IMR-90 (cell line): ENCODE measurements at regions of chr4 and their contacts with region 1.

Region 1: GRCh38 chr4:128287871-128288688 is 467 bp upstream of the PGRMC2 start:
- DNase-seq: peak; percentile 99
- ATAC-seq: peak; percentile 92
- H3K4me3 ChIP-seq: peak overlapping the region; percentile 65
- H3K27ac ChIP-seq: peak overlapping the region; percentile 90
- H3K4me1 ChIP-seq: peaks cover 4% of the 10 kb centered on the region; the same call in 1 of the 2 replicates
- H3K27me3 ChIP-seq: no peaks in the 10 kb centered on the region
- CTCF ChIP-seq: peak; percentile 28; the same call in 1 of the 2 replicates
- POLR2A ChIP-seq: peak; percentile 70
- RAD21 ChIP-seq: peak; percentile 37

Region 2: GRCh38 chr4:128191115-128191781 is 96.8 kb before region 1 on chr4:
- CTCF ChIA-PET with region 1: no interaction called
- POLR2A ChIA-PET with region 1: no interaction called
- dilution Hi-C with region 1: no loop called
- in situ Hi-C with region 1: no loop called
- intact Hi-C with region 1: loop called (anchors 1 kb)
- DNase-seq: peak; percentile 77
- ATAC-seq: peak; percentile 98
- H3K4me3 ChIP-seq: no peak overlapping the region
- H3K27ac ChIP-seq: peak overlapping the region; percentile 9
- H3K4me1 ChIP-seq: peaks cover 5% of the 10 kb centered on the region
- H3K27me3 ChIP-seq: no peaks in the 10 kb centered on the region
- CTCF ChIP-seq: peak; percentile 92
- POLR2A ChIP-seq: no peak
- RAD21 ChIP-seq: peak; percentile 95

Region 3: GRCh38 chr4:128386761-128387599 is 98.9 kb after region 1 on chr4:
- CTCF ChIA-PET with region 1: no interaction called
- POLR2A ChIA-PET with region 1: no interaction called
- dilution Hi-C with region 1: no loop called
- in situ Hi-C with region 1: no loop called
- intact Hi-C with region 1: loop called (anchors 1 kb)
- DNase-seq: peak; percentile 97
- ATAC-seq: peak; percentile 68
- H3K4me3 ChIP-seq: no peak overlapping the region
- H3K27ac ChIP-seq: peak overlapping the region; percentile 91
- H3K4me1 ChIP-seq: peaks cover 34% of the 10 kb centered on the region
- H3K27me3 ChIP-seq: no peaks in the 10 kb centered on the region
- CTCF ChIP-seq: 0 out of 2 replicates have a peak, but pooled peaks have one; percentile 18
- POLR2A ChIP-seq: peak; percentile 53
- RAD21 ChIP-seq: peak; percentile 29

Region 4: GRCh38 chr4:128553686-128554515 is 265.8 kb after region 1 on chr4:
- CTCF ChIA-PET with region 1: no interaction called
- POLR2A ChIA-PET with region 1: no interaction called
- dilution Hi-C with region 1: no loop called
- in situ Hi-C with region 1: no loop called
- intact Hi-C with region 1: loop called (anchors 2 kb)
- DNase-seq: no peak
- ATAC-seq: no peak; the same call in 1 of the 2 replicates
- H3K4me3 ChIP-seq: peak overlapping the region; percentile 53; the same call in 1 of the 2 replicates
- H3K27ac ChIP-seq: peak overlapping the region; percentile 88; the same call in 1 of the 2 replicates
- H3K4me1 ChIP-seq: peaks cover 14% of the 10 kb centered on the region
- H3K27me3 ChIP-seq: no peaks in the 10 kb centered on the region
- CTCF ChIP-seq: no peak
- POLR2A ChIP-seq: no peak
- RAD21 ChIP-seq: no peak

Region 5: DNA sequence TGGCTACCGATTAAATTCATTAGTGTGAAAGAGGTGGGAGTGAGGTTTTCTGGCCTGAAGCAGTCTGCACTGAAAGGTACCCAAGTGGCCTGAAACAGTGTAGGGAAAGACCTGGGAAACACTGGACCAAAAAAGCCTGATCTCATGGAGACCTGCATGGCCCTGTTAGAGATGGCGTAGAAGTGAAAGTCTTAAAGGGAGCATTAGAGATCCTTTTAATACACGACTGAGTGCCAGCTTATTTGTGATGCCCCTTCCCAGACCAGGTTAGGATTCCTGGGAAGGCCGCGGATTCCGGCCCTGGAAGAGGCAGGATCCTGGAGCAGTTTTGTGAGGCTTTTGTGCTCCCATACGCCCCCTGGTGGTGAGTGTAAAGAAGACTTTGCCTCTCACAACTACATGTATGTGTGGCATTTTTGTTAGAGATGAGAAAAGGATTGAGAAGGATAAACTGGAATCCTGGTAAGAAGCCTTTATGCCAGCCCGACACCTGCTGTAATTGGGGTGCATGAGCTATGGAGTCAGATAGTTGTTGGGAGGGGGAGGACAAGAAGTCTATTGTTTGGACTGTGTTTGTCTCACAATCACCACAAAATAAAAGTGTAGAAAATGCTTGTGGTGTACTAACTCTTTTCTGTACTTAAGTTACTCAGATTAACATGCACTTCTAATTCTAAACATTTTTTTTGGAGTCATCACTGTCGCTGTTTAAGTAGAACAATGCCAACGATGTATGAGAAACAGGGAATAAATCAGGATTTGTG is 575.4 kb after region 1 on chr4:
- CTCF ChIA-PET with region 1: no interaction called
- POLR2A ChIA-PET with region 1: no interaction called
- dilution Hi-C with region 1: no loop called
- in situ Hi-C with region 1: loop called (anchors 10 kb)
- intact Hi-C with region 1: loop called (anchors 5 kb)
- DNase-seq: peak; percentile 80
- ATAC-seq: peak; percentile 65; the same call in 1 of the 2 replicates
- H3K4me3 ChIP-seq: no peak overlapping the region
- H3K27ac ChIP-seq: 0 out of 2 replicates have a peak overlapping the region, but pooled peaks have one; percentile 0
- H3K4me1 ChIP-seq: peaks cover 24% of the 10 kb centered on the region
- H3K27me3 ChIP-seq: no peaks in the 10 kb centered on the region
- CTCF ChIP-seq: peak; percentile 79
- POLR2A ChIP-seq: no peak
- RAD21 ChIP-seq: peak; percentile 78

Region 6: DNA sequence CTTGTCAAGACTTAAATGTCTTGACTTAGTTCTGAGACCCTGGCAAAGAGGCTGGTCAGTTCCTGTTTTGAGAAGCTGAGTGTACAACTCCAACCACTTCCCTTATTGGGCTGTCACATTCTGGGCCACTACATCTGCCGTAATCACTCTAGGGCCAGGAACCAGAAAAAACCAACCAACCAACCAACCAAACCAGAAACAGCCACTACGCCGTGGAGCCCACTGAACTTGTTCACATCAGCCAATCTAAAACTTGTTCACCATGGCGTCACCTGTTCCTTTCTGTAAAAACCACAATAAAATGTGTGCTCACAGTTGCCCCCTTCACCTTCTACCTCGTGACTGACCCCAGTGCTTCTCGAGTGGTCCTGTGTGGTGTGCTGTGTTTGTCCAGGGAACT is 628.8 kb after region 1 on chr4:
- CTCF ChIA-PET with region 1: no interaction called
- POLR2A ChIA-PET with region 1: no interaction called
- dilution Hi-C with region 1: no loop called
- in situ Hi-C with region 1: no loop called
- intact Hi-C with region 1: no loop called
- DNase-seq: no peak
- ATAC-seq: no peak
- H3K4me3 ChIP-seq: no peak overlapping the region
- H3K27ac ChIP-seq: no peak overlapping the region
- H3K4me1 ChIP-seq: no peaks in the 10 kb centered on the region
- H3K27me3 ChIP-seq: no peaks in the 10 kb centered on the region
- CTCF ChIP-seq: no peak
- POLR2A ChIP-seq: no peak
- RAD21 ChIP-seq: no peak

Region 7: GRCh38 chr4:128974136-128974581 is 686.1 kb after region 1 on chr4:
- CTCF ChIA-PET with region 1: no interaction called
- POLR2A ChIA-PET with region 1: no interaction called
- dilution Hi-C with region 1: no loop called
- in situ Hi-C with region 1: no loop called
- intact Hi-C with region 1: no loop called
- DNase-seq: peak; percentile 25
- ATAC-seq: peak; percentile 69
- H3K4me3 ChIP-seq: no peak overlapping the region
- H3K27ac ChIP-seq: no peak overlapping the region
- H3K4me1 ChIP-seq: peaks cover 4% of the 10 kb centered on the region
- H3K27me3 ChIP-seq: no peaks in the 10 kb centered on the region
- CTCF ChIP-seq: no peak
- POLR2A ChIP-seq: no peak
- RAD21 ChIP-seq: no peak

Region 8: GRCh38 chr4:129344058-129344457 is 1056.0 kb after region 1 on chr4:
- CTCF ChIA-PET with region 1: no interaction called
- POLR2A ChIA-PET with region 1: no interaction called
- dilution Hi-C with region 1: no loop called
- in situ Hi-C with region 1: no loop called
- intact Hi-C with region 1: loop called (anchors 5 kb)
- DNase-seq: peak; percentile 27
- ATAC-seq: peak; percentile 35; the same call in 1 of the 2 replicates
- H3K4me3 ChIP-seq: no peak overlapping the region
- H3K27ac ChIP-seq: no peak overlapping the region
- H3K4me1 ChIP-seq: no peaks in the 10 kb centered on the region
- H3K27me3 ChIP-seq: no peaks in the 10 kb centered on the region; the same call in 1 of the 2 replicates
- CTCF ChIP-seq: peak; percentile 55
- POLR2A ChIP-seq: no peak
- RAD21 ChIP-seq: peak; percentile 45